AG04450 (cell line): ENCODE measurements at regions of chr3 and their contacts with region 1.

Region 1: GRCh38 chr3:156509189-156510174 is 45.4 kb downstream of the SSR3 start:
- DNase-seq: peak; percentile 34
- H3K4me3 ChIP-seq: no peak overlapping the region
- H3K27ac ChIP-seq: no peak overlapping the region
- H3K27me3 ChIP-seq: no peaks in the 10 kb centered on the region
- CTCF ChIP-seq: peak; percentile 60

Region 2: GRCh38 chr3:156132313-156132712 is 377.2 kb before region 1 on chr3:
- CTCF ChIA-PET with region 1: no interaction called
- POLR2A ChIA-PET with region 1: no interaction called
- DNase-seq: no peak
- H3K4me3 ChIP-seq: no peak overlapping the region
- H3K27ac ChIP-seq: no peak overlapping the region
- H3K27me3 ChIP-seq: peaks cover 2% of the 10 kb centered on the region
- CTCF ChIP-seq: no peak

Region 3: DNA sequence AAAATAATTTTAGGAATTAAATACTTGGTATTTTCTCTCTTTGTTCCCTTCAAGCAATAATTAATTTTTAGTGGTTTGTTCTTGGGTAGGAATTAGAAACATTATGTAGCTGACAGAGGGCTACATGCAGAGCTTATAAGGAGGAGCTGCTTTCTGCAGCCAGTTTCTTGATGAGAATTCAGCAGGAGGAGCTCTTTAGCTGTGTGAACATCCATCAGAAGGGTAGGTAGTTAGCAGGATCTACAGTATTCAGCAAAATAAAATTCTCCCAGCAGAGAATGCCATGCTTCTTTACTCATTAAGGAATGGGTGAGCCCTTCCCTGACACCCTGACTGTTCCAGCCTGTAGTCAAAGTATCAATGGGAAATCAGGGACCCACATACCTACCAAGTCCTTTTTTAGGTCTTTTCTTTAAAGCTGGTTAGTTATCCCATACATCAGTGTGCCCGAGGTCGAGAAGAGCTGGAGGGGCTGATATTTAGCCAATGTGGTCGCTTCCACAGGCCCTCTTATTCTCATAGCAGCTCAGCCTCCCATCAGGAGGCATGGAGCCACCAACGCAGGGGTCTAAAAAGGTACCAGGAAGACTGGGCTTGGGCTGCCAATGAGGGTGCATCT is 335.1 kb before region 1 on chr3:
- CTCF ChIA-PET with region 1: interaction called, 36 read pairs
- POLR2A ChIA-PET with region 1: no interaction called
- DNase-seq: peak; percentile 13
- H3K4me3 ChIP-seq: no peak overlapping the region
- H3K27ac ChIP-seq: no peak overlapping the region
- H3K27me3 ChIP-seq: no peaks in the 10 kb centered on the region
- CTCF ChIP-seq: peak; percentile 42

Region 4: GRCh38 chr3:156460206-156460611 is 49.3 kb before region 1 on chr3:
- CTCF ChIA-PET with region 1: interaction called, 14 read pairs
- POLR2A ChIA-PET with region 1: no interaction called
- DNase-seq: no peak
- H3K4me3 ChIP-seq: no peak overlapping the region
- H3K27ac ChIP-seq: no peak overlapping the region
- H3K27me3 ChIP-seq: peaks cover 4% of the 10 kb centered on the region
- CTCF ChIP-seq: no peak

Region 5: DNA sequence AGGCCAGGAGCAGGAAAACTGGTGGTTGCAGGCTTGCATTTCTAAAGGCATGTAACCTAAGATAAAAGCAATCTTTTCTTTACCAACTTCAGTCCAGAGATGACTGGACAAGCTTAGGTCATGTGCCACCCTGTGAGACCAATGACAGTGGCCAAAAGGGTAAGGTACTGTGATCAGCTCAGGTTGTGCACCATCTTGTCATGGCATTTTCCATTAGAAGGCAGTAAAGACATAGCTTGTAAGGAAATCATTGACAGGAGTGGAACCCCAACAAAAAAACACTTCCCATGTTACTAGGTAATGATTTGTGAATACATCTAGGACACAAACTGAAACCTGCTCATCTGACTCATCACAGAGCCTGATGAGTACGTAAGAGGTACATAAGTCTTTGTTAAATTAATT is 10.3 kb after region 1 on chr3:
- CTCF ChIA-PET with region 1: interaction called, 30 read pairs
- POLR2A ChIA-PET with region 1: no interaction called
- DNase-seq: no peak
- H3K4me3 ChIP-seq: no peak overlapping the region
- H3K27ac ChIP-seq: no peak overlapping the region
- H3K27me3 ChIP-seq: no peaks in the 10 kb centered on the region
- CTCF ChIP-seq: no peak